Caco-2 (cell line): ENCODE measurements at regions of chr11 and their contacts with region 1.

Region 1: DNA sequence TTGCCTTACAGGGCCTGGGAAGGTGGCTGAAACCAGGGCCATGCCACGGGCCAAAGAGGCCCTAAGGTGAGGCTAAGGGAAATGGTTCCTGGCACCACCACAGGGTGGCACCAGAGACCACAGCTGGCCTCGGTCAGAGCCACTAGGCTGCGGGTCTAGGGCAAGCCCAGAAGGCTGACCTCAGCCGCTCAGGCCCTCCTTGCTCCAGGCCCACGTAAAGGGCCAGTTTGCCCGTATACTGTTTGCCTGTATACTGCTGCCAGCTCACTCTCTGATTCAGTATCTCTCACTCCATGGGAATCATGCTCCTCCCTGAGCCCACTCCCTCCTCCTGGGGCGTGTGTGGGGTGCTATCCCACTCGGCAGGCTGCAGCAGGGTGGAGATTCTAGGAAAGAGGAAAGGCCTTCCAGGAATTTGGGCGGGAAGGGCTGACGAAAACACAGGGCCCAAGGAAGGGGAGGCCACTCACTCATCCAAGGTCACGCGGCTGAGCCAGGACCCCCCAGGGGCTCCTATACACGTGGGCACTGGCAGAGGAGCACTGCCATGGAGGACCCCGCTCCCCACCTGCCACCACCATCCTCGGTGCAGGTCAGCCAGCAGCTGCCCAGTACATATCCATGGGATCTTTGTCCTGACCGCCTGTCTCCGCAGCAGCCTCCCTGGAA is 62.4 kb downstream of the NECTIN1 start:
- DNase-seq: peak; percentile 86 to 94
- H3K4me3 ChIP-seq: no peak overlapping the region
- H3K4me3 Mint-ChIP-seq: no peak overlapping the region
- H3K27ac Mint-ChIP-seq: no peak overlapping the region
- H3K4me1 ChIP-seq: peaks cover 6% of the 10 kb centered on the region; the same call in 1 of the 2 replicates
- H3K4me1 Mint-ChIP-seq: peaks cover 7% of the 10 kb centered on the region
- H3K27me3 ChIP-seq: no peaks in the 10 kb centered on the region
- H3K27me3 Mint-ChIP-seq: no peaks in the 10 kb centered on the region
- CTCF ChIP-seq: peak; percentile 99

Region 2: DNA sequence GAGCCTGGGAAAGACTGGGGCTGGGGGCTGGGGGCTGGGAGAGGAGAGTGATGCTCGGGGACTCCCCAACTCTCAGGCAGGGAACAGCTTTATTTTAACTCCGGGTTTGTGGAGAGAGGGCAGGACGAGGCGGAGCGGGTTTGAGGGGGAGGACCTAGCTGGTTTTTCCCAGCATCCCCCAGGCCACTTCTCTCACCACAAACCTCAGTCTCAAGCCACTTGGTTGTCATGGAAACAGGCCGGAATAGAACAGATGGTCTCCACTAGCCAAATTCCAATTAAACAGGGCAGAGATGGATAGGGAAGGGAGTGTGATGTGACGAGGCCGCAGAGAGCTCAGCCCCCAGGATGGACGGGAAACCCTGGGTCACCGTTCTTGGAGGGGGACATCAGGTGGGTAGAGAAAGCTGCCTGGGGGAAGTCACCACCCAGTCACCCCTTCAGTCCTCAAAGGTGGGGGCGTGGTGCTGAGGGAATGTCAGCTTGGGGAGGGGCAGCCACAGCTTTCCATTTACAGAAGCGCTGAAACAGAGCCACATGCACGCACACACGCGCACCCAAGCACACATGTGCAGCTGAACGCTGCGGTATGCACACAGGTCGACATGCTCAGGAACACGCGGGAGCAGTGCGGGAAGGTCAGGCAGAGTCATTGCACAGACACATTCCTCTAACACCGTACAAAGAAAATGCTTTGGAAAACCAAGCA is 43.2 kb after region 1 on chr11:
- CTCF ChIA-PET with region 1: no interaction called
- POLR2A ChIA-PET with region 1: no interaction called
- intact Hi-C with region 1: loop called (anchors 5 kb)
- DNase-seq: no peak
- H3K4me3 ChIP-seq: no peak overlapping the region
- H3K4me3 Mint-ChIP-seq: no peak overlapping the region
- H3K27ac Mint-ChIP-seq: peak overlapping the region; percentile 28
- H3K4me1 ChIP-seq: peaks cover 68% of the 10 kb centered on the region
- H3K4me1 Mint-ChIP-seq: peaks cover 81% of the 10 kb centered on the region
- H3K27me3 ChIP-seq: no peaks in the 10 kb centered on the region
- H3K27me3 Mint-ChIP-seq: no peaks in the 10 kb centered on the region
- CTCF ChIP-seq: no peak

Region 3: DNA sequence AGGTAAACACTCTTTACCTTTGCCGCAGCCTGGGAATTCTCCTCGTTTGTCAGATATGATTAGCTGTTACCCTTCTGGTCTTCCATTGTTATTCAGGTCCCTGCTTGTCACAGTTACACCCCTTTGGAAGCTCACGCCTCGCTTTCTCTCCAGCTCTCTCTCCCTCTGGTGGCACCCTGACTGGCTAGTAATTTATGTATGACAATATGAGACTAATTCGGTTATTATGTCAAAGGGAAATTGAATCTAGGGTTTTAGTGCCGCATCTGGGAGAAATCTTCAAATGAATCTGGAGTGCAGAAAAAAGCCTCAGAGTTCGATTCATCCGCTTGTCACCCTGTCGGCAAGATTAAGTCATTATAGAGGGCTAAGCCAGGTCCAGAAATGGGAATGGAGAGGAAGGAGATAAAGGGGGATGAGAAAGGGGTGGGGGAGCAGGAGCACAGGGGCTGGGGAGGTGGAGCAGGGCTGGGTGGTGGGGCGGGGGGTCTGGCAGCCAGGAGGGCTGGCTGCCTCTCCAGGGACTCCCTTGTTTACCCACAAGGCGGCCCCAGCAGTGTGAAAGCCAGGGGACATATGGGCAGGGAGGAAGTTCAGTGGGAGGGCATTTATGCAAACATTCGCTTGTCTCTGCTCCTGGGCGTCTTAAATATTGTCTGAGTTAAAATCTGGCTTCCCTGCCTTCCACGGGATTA is 241.4 kb after region 1 on chr11:
- CTCF ChIA-PET with region 1: no interaction called
- POLR2A ChIA-PET with region 1: no interaction called
- intact Hi-C with region 1: no loop called
- DNase-seq: no peak
- H3K4me3 ChIP-seq: no peak overlapping the region
- H3K4me3 Mint-ChIP-seq: peak overlapping the region; percentile 64
- H3K27ac Mint-ChIP-seq: peak overlapping the region; percentile 86
- H3K4me1 ChIP-seq: peaks cover 70% of the 10 kb centered on the region
- H3K4me1 Mint-ChIP-seq: peaks cover 79% of the 10 kb centered on the region
- H3K27me3 ChIP-seq: no peaks in the 10 kb centered on the region
- H3K27me3 Mint-ChIP-seq: no peaks in the 10 kb centered on the region
- CTCF ChIP-seq: peak in 1 of 2 experiments; percentile 11

Region 4: DNA sequence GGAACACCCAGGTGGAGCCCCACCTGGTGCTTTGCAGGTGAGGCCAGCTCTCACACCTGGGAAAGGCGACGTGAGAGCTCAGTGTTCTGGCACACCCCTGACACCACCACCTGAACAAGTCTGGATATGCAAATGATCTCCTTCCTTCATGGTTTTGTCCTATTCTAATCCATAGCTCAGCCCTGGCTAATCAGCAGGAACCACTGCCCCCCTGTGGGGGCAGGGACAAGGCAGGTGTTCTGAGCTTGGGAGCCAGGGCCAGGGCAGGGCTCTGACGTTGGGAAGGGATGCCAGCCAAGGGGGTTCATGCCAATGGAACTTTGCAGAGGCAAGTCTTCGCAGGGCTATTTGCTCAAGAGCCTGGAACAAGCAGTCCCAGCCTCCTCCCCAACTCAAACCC is 327.1 kb after region 1 on chr11:
- CTCF ChIA-PET with region 1: no interaction called
- POLR2A ChIA-PET with region 1: no interaction called
- intact Hi-C with region 1: loop called (anchors 1 kb)
- DNase-seq: peak in 1 of 2 experiments; percentile 69
- H3K4me3 ChIP-seq: no peak overlapping the region
- H3K4me3 Mint-ChIP-seq: no peak overlapping the region
- H3K27ac Mint-ChIP-seq: no peak overlapping the region
- H3K4me1 ChIP-seq: 0 out of 2 replicates have a peak, but pooled peaks cover 8% of the 10 kb centered on the region
- H3K4me1 Mint-ChIP-seq: no peaks in the 10 kb centered on the region
- H3K27me3 ChIP-seq: no peaks in the 10 kb centered on the region
- H3K27me3 Mint-ChIP-seq: no peaks in the 10 kb centered on the region
- CTCF ChIP-seq: peak; percentile 33 to 82

Region 5: GRCh38 chr11:120013325-120014270 is 347.0 kb after region 1 on chr11:
- CTCF ChIA-PET with region 1: no interaction called
- POLR2A ChIA-PET with region 1: no interaction called
- intact Hi-C with region 1: loop called (anchors 1 kb)
- DNase-seq: peak; percentile 72 to 74
- H3K4me3 ChIP-seq: no peak overlapping the region
- H3K4me3 Mint-ChIP-seq: no peak overlapping the region
- H3K27ac Mint-ChIP-seq: no peak overlapping the region
- H3K4me1 ChIP-seq: peaks cover 7% of the 10 kb centered on the region
- H3K4me1 Mint-ChIP-seq: peaks cover 12% of the 10 kb centered on the region
- H3K27me3 ChIP-seq: peaks cover 3% of the 10 kb centered on the region
- H3K27me3 Mint-ChIP-seq: peaks cover 21% of the 10 kb centered on the region
- CTCF ChIP-seq: peak; percentile 89 to 96

Region 6: DNA sequence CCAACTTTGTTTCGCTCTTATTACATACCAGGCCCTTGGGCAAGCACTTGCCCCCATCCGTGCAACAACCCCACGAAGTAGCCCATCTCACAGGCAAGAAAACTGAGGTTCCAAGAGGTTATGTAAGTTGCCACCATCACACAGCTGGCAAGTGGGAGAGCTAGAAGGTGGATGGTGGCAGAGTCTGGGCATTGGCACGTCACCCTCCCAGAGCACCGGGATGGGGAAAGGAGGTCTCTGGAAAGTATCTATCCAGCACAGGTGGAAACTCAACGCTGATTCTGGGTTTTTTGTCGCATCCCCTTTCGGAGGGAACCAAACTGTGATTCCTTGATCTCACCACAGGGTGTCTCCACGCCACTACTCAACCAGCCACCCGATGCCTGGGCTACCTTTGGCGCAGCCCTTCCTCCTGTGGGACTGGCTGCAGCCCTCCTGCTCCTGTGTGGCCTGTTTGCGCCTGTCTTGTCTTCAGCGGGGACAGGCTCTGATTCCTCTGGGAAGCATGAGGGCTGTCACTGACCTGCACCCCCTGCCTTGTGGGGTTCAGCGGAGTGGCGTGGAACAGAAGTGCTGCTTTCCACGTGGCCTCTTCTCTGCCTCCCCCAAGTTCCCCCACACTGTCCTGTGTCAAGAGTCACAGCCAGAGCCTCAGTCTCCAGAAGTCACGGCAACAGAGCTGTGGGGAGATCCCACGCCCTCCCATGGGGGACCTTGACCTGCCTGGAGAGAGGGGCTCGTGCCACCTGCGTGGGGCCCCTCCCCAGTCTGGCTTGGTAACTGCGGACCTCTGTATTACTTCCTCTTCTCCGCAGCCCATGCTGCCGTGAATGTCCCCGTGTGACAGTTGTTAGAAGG is 505.7 kb after region 1 on chr11:
- CTCF ChIA-PET with region 1: no interaction called
- POLR2A ChIA-PET with region 1: no interaction called
- intact Hi-C with region 1: loop called (anchors 1 kb)
- DNase-seq: peak; percentile 87 to 88
- H3K4me3 ChIP-seq: no peak overlapping the region
- H3K4me3 Mint-ChIP-seq: no peak overlapping the region
- H3K27ac Mint-ChIP-seq: no peak overlapping the region
- H3K4me1 ChIP-seq: peaks cover 8% of the 10 kb centered on the region
- H3K4me1 Mint-ChIP-seq: no peaks in the 10 kb centered on the region
- H3K27me3 ChIP-seq: no peaks in the 10 kb centered on the region
- H3K27me3 Mint-ChIP-seq: peaks cover 9% of the 10 kb centered on the region
- CTCF ChIP-seq: peak; percentile 95 to 98